ENCODE measurements at regions of chr12 and their contacts with region 1.

Region 1: GRCh38 chr12:52069327-52070184 is at the start of gene ATG101:
- DNase-seq: peak; percentile 90
- H3K4me3 Mint-ChIP-seq: peak within 1 kb of the TSS; percentile 90
- H3K27ac Mint-ChIP-seq: peak within 1 kb of the TSS; percentile 95
- H3K4me1 Mint-ChIP-seq: peaks cover 47% of the 10 kb centered on the region
- H3K27me3 Mint-ChIP-seq: peaks cover 35% of the 10 kb centered on the region

Region 2: DNA sequence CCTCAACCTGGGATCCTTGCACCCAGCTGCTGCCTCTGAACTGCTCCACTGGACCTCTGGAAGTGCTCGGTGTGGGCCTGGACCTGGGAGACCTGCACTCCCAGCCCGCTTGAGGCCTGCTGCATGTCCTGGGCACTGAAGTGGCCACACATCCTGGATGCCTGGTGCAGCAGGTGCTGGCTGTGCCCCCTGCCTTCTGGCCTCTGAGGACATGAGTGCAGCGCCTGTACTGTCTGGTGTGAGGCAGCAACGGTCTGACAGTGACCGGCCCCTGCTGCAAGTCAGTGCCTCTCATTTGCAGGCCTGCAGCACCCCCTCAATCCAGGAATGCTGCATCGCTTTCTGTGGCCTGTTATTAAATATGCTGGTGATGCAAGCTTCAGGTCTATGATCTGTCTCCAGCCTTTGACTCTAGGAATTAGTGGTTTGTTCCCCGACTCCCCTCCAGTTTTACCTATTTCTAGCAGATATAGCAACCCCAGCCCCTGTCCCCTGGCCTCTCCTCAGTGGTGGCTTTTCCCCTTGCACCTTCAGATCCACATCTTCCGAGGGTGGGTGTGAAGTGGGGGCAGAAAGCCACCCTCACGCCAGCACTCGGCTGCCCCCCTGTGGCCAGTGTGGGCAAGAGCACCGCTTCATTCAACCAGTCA is 13.6 kb after region 1 on chr12:
- CTCF ChIA-PET with region 1: interaction called, 40 read pairs
- DNase-seq: peak; percentile 78
- H3K4me3 Mint-ChIP-seq: no peak overlapping the region
- H3K27ac Mint-ChIP-seq: no peak overlapping the region
- H3K4me1 Mint-ChIP-seq: peaks cover 27% of the 10 kb centered on the region
- H3K27me3 Mint-ChIP-seq: peaks cover 28% of the 10 kb centered on the region

Region 3: DNA sequence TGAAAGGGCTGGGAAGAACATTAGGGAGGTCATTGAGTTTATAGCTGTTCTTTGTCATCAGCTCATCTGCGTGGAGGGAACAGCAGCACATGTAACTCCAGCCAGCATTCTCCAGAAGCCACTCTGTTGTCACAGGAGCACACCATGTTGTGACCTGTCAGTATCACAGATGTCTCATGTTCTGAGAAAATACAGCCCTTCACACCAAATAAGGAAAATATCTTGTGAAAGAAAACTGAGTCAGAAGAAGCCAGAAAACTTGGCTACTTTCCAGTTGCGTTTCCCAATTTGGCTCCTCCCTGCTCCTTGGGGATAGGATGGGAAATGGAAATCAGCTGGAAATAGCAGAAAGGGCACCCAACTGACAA is 346.8 kb after region 1 on chr12:
- CTCF ChIA-PET with region 1: no interaction called
- DNase-seq: no peak
- H3K4me3 Mint-ChIP-seq: no peak overlapping the region
- H3K27ac Mint-ChIP-seq: no peak overlapping the region
- H3K4me1 Mint-ChIP-seq: no peaks in the 10 kb centered on the region
- H3K27me3 Mint-ChIP-seq: peaks cover 16% of the 10 kb centered on the region